Activated CD8-positive, alpha-beta T cell treated with anti-CD3 and anti-CD28 coated beads, Interleukin-2, amount 10 ng/mL, durations not matched to agents 7 days and 5 days (primary cell): ENCODE measurements at regions of chr6 and their contacts with region 1.

Region 1: GRCh38 chr6:32177788-32178546 is at the start of gene RNF5:
- DNase-seq: peak; percentile 97
- ATAC-seq: peak; percentile 89
- H3K4me3 Mint-ChIP-seq: peak within 1 kb of the TSS; percentile 90
- H3K27ac Mint-ChIP-seq: peak within 1 kb of the TSS; percentile 92
- H3K4me1 Mint-ChIP-seq: peaks cover 66% of the 10 kb centered on the region
- H3K27me3 Mint-ChIP-seq: no peaks in the 10 kb centered on the region
- total RNA-seq, gene RNF5: 40.4 to 43.3 TPM

Region 2: DNA sequence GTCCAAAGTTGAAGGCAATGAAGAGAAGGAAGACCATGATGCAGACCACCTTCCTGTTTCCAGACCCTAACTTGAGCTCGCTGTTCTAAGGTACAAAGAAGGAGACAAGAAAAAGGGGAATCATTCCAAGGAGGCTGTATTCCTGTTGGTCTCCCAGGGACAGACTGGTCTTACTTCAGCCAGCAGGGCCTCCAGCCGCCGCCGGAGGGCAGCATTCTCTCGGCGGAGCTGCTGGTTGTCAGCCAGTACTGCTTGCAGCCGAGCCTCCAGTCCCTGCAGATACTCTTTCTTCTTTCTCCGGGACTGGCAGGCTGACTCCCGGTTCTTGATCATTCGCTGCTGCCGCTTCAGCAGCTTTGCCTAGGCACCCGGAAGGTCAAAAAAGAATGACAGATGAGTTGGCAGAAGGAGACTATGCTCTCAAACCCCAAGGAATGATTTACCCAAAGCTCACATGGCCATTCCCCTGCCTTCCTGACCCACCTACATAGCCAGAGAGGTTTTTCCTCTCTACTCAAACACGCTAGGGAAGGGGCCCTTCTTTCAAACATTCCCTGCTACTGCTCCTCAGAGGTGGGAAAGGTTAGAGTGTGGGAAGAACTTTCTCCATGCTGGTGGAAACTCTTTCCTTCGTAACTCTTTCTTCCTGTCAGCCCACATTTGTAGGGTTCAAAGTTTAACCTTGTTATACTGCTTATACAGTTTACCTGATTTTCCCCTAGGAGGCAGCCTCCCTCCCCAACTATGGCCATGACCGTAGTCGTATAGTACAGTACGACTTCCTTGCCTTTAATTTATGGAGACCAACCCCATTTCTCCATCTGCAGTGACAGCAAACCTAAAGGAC is 59.0 kb before region 1 on chr6:
- CTCF ChIA-PET with region 1: interaction called, 10 read pairs
- POLR2A ChIA-PET with region 1: no interaction called
- DNase-seq: peak; percentile 80
- ATAC-seq: peak; percentile 86
- H3K4me3 Mint-ChIP-seq: no peak overlapping the region
- H3K27ac Mint-ChIP-seq: peak overlapping the region; percentile 67
- H3K4me1 Mint-ChIP-seq: peaks cover 10% of the 10 kb centered on the region
- H3K27me3 Mint-ChIP-seq: no peaks in the 10 kb centered on the region

Region 3: GRCh38 chr6:32190054-32190851 is 12.3 kb after region 1 on chr6 and contains the start of gene PBX2:
- CTCF ChIA-PET with region 1: interaction called, 25 read pairs
- POLR2A ChIA-PET with region 1: interaction called, 45 read pairs
- DNase-seq: peak; percentile 93
- ATAC-seq: peak; percentile 61
- H3K4me3 Mint-ChIP-seq: peak within 1 kb of the TSS; percentile 99
- H3K27ac Mint-ChIP-seq: peak within 1 kb of the TSS; percentile 97
- H3K4me1 Mint-ChIP-seq: peaks cover 59% of the 10 kb centered on the region
- H3K27me3 Mint-ChIP-seq: no peaks in the 10 kb centered on the region
- total RNA-seq, gene PBX2: 60.5 to 68.5 TPM

Region 4: DNA sequence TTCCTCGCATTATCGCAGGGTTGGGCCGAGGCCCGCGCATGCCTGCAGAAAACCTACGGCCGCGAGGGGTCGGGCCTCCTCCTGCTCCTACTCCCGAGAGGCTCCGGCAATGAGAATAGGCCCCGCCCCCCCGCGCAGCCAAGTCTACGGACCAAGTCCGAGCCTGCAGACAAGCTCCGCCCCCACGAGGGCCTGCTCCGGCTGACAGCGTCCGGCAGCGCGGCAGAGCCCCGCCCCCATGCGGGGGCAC is 17.6 kb after region 1 on chr6:
- CTCF ChIA-PET with region 1: interaction called, 25 read pairs
- POLR2A ChIA-PET with region 1: interaction called, 45 read pairs
- DNase-seq: peak; percentile 100
- ATAC-seq: peak; percentile 90
- H3K4me3 Mint-ChIP-seq: peak overlapping the region; percentile 97
- H3K27ac Mint-ChIP-seq: peak overlapping the region; percentile 99
- H3K4me1 Mint-ChIP-seq: peaks cover 33% of the 10 kb centered on the region
- H3K27me3 Mint-ChIP-seq: no peaks in the 10 kb centered on the region